ENCODE measurements at regions of chr3 and their contacts with region 1.

Region 1: DNA sequence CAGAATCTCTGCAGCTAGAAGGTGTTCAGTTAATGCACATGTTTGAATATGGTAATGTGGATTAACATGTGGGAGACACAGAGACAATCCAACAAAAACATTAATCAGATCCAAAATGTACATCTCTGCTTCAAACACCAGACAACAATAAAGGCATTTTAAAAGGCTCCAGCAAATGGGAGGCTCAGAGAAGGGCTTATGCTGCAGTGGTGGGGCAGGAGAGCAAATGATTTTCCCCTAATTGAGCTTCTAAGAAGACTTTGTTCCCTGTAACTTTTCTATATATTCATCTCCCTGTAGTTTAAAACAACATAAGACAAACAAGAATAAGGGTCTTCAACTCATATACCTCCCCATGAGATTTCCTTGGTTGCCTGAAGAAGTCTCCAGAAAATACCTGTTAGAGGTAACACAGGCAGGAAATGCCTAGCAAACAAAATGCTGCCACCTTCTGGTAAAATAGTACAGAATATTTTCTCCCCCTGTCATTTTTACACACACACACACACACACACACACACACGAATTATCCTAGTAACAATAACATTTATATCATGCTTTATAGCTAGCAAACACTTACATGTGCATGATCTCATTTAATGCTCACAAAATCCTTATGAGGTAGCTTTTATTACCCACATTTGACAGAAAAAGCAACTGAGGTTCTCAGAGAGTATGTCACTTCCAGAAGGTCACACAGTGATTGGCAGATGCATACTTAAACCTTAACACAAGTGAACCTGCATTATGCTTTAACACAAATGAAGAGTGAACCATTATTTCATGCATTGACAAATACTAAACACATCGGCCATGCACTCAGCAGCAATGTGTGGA is 123.4 kb upstream of the MB21D2 start:
- DNase-seq: peak; percentile 4 to 39 (median 27)
- H3K4me3 ChIP-seq: no peak overlapping the region
- H3K4me3 Mint-ChIP-seq: no peak overlapping the region
- H3K27ac ChIP-seq: no peak overlapping the region
- H3K27ac Mint-ChIP-seq: no peak overlapping the region
- H3K4me1 ChIP-seq: no peaks in the 10 kb centered on the region
- H3K4me1 Mint-ChIP-seq: no peaks in the 10 kb centered on the region
- H3K27me3 ChIP-seq: no peaks in the 10 kb centered on the region
- H3K27me3 Mint-ChIP-seq: peaks cover 0 to 5% (median 5%) of the 10 kb centered on the region in 3 donors
- CTCF ChIP-seq: peak; percentile 47

Region 2: GRCh38 chr3:192816351-192816750 is 224.7 kb before region 1 on chr3:
- intact Hi-C with region 1: loop called (anchors 2 to 5 kb)
- DNase-seq: peak; percentile 13 to 48 (median 33)
- H3K4me3 ChIP-seq: no peak overlapping the region
- H3K4me3 Mint-ChIP-seq: no peak overlapping the region
- H3K27ac ChIP-seq: no peak overlapping the region
- H3K27ac Mint-ChIP-seq: no peak overlapping the region
- H3K4me1 ChIP-seq: no peaks in the 10 kb centered on the region
- H3K4me1 Mint-ChIP-seq: no peaks in the 10 kb centered on the region
- H3K27me3 ChIP-seq: no peaks in the 10 kb centered on the region
- H3K27me3 Mint-ChIP-seq: peaks cover 3 to 9% (median 7%) of the 10 kb centered on the region in 3 donors
- CTCF ChIP-seq: peak; percentile 80

Measured in CD14-positive monocyte (primary cell).